ENCODE measurements at regions of chr2 and their contacts with region 1.

Region 1: DNA sequence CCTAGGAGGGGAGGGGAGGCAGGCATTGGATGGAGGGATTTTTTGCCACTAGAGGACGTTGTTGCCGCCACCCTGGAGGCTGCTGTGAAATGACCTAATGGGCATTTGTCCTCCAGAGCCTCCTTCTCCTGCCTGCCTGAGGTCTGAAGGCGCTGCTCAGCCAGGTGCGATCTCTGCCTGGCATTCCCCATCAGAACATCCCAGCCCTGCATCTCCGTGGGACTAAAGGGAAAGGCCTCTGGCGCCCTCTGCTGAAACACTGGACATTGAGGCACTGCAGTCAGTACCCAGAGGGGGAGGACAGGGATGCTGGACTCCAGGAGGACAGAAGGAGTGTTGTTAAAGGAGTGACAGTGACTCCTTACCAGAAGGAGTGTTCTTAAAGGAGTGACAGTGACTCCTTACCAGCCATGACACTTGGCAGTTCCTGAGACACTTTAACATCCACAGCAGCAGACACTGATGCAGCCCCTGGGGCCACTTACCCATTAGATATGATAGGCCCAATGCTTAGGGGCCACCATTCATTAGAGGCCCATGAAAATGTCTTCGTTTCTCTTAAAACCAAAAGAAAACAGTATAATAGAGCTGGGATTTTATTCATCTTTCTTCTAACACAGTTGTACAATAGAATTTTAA is 17.0 kb downstream of the THNSL2 start:
- DNase-seq: no peak
- H3K4me3 ChIP-seq: no peak overlapping the region
- CTCF ChIP-seq: no peak
- POLR2A ChIP-seq: no peak

Region 2: DNA sequence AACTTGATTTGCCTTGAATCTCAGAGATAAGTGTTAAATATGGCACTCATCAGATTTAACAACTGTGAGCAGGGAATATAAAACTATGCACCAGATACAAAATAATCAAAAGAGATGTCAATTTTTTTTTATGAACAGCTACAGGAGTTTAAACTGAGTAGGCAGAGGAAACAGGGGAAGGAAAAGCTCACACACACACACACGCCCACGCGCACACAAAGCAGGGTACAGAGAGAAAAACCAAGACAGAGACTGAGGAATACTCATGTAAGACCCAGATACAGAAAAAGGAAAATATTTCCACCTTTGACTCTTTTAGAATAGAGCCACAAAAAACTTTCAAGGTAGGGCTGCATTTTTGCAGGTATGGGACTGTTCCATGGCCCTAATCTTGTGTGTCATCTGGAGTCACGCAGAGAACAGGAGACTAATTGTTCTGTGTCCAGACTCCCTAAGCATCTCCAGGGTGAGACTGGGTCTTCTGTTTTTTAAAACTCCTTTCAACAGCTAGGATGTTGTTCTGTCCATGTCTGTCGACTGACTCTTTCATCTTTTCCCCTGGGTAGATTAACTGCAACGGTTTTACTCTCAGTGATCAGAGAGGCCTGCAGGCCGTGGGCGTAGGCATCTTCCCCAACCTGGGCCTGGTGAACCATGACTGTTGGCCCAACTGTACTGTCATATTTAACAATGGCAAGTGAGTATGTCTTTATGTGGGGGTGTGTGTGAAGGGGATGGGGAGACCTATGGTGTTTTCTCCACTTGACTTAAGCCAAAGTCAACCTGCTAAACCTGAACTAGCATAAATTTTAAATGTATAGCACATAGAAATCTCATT is 96.5 kb before region 1 on chr2:
- intact Hi-C with region 1: loop called (anchors 5 kb)
- DNase-seq: no peak
- H3K4me3 ChIP-seq: no peak overlapping the region
- CTCF ChIP-seq: no peak
- POLR2A ChIP-seq: no peak

Region 3: GRCh38 chr2:88159955-88160415 is 27.2 kb before region 1 on chr2:
- intact Hi-C with region 1: no loop called
- DNase-seq: peak in 1 of 2 donors; percentile 64
- H3K4me3 ChIP-seq: no peak overlapping the region
- CTCF ChIP-seq: peak in 1 of 3 donors; percentile 54
- POLR2A ChIP-seq: no peak